ENCODE measurements at regions of chr2 and their contacts with region 1.

Region 1: DNA sequence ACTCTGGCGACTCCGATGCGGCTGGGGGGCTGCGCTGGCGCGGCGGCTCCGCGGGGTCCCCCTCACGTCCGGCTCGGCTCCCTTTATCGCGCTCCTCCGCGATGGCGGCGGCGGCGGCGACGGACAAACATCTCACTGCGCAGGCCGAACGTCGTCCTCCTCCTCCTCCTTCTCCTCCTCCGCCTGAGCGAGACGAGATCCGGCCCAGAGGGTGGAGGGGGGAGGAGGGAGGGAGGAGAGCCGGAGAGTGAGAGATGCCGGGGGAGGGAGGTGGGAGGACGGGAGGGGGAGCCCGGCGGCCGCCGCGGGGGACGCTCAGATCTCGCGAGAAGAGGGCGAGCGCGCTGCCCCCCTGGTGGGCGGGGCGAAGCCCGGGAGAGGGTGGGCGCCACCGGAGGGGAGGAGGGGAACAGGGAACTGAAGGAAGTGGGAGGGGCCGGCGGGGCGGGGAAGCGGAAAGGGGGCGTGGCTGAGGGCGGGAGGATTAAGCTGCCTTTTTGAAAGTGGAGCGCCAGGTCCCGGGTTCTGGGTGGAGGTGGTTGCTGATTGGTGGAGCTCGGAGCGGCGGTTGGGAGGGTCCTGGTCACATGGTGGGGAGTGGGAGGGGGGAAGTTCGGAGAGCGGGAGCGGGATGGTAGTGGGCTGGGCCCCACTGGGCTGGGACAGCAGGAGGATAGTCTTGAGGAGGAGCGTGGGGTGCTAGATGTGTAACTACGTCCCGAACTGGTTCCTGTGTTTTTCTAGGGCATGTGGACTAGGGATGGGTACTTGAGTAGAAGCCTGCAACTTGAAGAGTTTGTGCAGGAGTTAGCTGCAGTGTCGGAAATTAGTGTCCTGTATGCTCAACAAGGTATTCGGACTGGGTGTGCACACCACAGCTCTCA is at the start of gene CUL3:
- DNase-seq: peak; percentile 98 to 99
- H3K4me3 ChIP-seq: peak within 1 kb of the TSS; percentile 74 to 79 (median 76)
- H3K27ac ChIP-seq: peak within 1 kb of the TSS; percentile 72 to 85 (median 79)
- H3K4me1 ChIP-seq: peaks cover 24 to 27% of the 10 kb centered on the region in 2 donors
- H3K27me3 ChIP-seq: no peaks in the 10 kb centered on the region
- CTCF ChIP-seq: no peak
- POLR2A ChIP-seq: peak; percentile 80 to 91
- total RNA-seq, gene CUL3: 91.9 to 122 (median 107) TPM

Region 2: GRCh38 chr2:224433442-224433841 is 152.0 kb before region 1 on chr2:
- intact Hi-C with region 1: no loop called
- DNase-seq: no peak
- H3K4me3 ChIP-seq: no peak overlapping the region
- H3K27ac ChIP-seq: no peak overlapping the region
- H3K4me1 ChIP-seq: no peaks in the 10 kb centered on the region
- H3K27me3 ChIP-seq: no peaks in the 10 kb centered on the region
- CTCF ChIP-seq: no peak
- POLR2A ChIP-seq: no peak

Region 3: GRCh38 chr2:224479826-224480225 is 105.6 kb before region 1 on chr2:
- intact Hi-C with region 1: loop called (anchors 10 kb)
- DNase-seq: no peak
- H3K4me3 ChIP-seq: no peak overlapping the region
- H3K27ac ChIP-seq: no peak overlapping the region
- H3K4me1 ChIP-seq: peaks cover 2% of the 10 kb centered on the region in 2 donors
- H3K27me3 ChIP-seq: no peaks in the 10 kb centered on the region
- CTCF ChIP-seq: no peak
- POLR2A ChIP-seq: no peak

Region 4: DNA sequence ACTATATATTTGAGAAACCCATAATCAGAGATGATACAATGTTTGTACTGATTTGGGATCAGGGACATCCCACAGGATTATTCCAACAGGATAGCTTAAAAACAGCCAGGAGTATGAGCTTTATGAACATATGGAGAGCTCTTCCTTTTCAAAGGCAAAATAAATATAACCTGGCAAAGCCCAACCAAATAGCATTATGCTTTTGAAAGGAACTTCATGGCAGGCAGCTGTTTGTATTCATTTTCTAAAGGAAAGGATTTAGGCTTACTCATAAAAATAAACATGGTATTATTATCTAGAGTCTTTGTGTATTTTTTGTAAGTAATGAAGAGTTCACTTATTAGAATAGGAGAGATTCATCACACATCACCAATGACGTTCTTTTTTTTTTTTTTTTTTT is 86.3 kb after region 1 on chr2:
- intact Hi-C with region 1: no loop called
- DNase-seq: no peak
- H3K4me3 ChIP-seq: no peak overlapping the region
- H3K27ac ChIP-seq: no peak overlapping the region
- H3K4me1 ChIP-seq: no peaks in the 10 kb centered on the region
- H3K27me3 ChIP-seq: no peaks in the 10 kb centered on the region
- CTCF ChIP-seq: no peak
- POLR2A ChIP-seq: no peak

Region 5: DNA sequence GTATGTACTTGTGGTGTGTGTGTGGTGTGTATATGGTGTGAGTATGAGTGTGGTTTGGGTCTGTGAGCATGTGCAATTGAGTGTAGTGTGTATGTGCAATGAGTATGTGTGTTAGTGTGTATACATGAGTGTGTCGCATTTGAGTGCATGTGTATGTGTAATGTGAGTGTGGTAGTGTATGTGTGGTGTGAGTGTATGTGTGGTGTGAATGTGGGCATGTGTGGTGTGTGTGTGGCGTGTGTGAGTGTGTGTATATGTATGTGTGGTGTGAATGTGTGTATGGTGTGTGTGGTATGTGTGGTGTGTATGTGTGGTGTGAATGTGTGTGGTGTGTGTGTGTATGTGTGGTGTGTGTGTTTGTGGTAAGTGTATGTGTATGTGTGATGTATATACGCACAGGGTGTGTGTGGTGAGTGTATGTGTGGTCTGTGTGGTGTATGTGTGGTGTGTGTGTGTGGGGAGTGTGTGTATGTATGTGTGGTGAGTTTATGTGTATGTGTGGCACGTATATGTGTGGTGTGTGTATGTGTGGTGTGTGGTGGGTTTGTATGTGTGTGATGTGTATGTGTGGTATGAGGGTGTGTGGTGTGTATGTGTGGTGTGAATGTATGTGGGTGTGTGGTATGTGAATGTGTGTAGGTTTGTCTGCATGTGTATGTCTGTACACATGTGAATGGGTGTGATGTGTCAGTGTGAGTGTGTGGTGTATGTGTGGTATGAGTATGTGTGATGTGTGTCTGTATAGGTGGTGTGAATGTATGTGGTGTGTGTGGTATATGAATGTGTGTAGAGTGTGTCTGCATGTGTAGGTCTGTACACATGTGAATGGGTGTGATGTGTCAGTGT is 333.4 kb after region 1 on chr2:
- intact Hi-C with region 1: no loop called
- DNase-seq: no peak
- H3K4me3 ChIP-seq: no peak overlapping the region
- H3K27ac ChIP-seq: no peak overlapping the region
- H3K4me1 ChIP-seq: no peaks in the 10 kb centered on the region
- H3K27me3 ChIP-seq: no peaks in the 10 kb centered on the region
- CTCF ChIP-seq: no peak
- POLR2A ChIP-seq: no peak

Measured in thyroid gland (tissue), 4 donors.